A673 (cell line): ENCODE measurements at regions of chr7 and their contacts with region 1.

Region 1: GRCh38 chr7:82049891-82050533 is 280.2 kb upstream of the HGF start:
- DNase-seq: peak; percentile 73
- H3K4me3 ChIP-seq: no peak overlapping the region
- H3K27ac ChIP-seq: peak overlapping the region; percentile 22
- H3K4me1 ChIP-seq: peaks cover 46% of the 10 kb centered on the region
- H3K27me3 ChIP-seq: no peaks in the 10 kb centered on the region
- CTCF ChIP-seq: no peak

Region 2: DNA sequence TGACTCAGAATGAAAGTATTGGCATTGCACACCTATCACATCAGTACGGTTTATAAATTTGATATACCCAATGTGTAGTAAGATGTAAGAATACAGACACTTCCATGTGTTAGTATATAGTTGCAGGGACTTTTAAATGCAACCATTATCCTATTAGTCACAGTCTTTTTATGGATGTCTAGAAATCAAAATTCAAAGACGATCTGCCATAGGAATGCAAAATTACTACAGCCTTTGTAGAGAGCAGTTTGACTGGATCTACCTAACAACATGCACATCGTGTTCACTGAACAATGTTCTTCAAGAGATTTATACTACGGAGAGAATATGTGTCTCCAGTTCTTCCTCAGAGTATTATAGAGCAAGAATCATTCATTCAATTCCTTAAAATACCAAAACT is 37.1 kb after region 1 on chr7:
- CTCF ChIA-PET with region 1: no interaction called
- POLR2A ChIA-PET with region 1: no interaction called
- intact Hi-C with region 1: loop called (anchors 5 kb)
- DNase-seq: peak; percentile 84
- H3K4me3 ChIP-seq: peak overlapping the region; percentile 6
- H3K27ac ChIP-seq: no peak overlapping the region
- H3K4me1 ChIP-seq: peaks cover 46% of the 10 kb centered on the region
- H3K27me3 ChIP-seq: no peaks in the 10 kb centered on the region
- CTCF ChIP-seq: no peak

Region 3: GRCh38 chr7:82141427-82141826 is 91.4 kb after region 1 on chr7:
- CTCF ChIA-PET with region 1: no interaction called
- POLR2A ChIA-PET with region 1: no interaction called
- intact Hi-C with region 1: loop called (anchors 10 kb)
- DNase-seq: no peak
- H3K4me3 ChIP-seq: no peak overlapping the region
- H3K27ac ChIP-seq: no peak overlapping the region
- H3K4me1 ChIP-seq: peaks cover 19% of the 10 kb centered on the region
- H3K27me3 ChIP-seq: no peaks in the 10 kb centered on the region
- CTCF ChIP-seq: no peak

Region 4: DNA sequence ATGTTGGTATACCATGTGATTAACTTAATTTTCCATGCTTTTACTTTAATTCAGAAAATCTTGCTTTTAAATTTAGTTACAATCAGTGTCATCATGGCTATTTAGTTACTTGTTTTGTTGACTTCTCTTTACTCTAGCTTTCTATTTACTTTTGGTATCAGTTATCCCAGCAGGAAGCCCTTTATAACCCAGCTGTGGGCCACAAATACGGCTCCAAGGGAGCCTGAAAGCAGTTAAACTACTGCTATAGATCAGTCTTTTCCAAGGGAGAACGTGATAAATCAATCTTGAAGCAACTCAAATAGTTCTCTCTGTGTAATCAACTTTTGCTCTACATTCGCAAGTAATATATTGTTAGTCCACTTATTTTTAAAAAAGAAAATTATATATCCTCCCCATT is 106.2 kb after region 1 on chr7:
- CTCF ChIA-PET with region 1: no interaction called
- POLR2A ChIA-PET with region 1: no interaction called
- intact Hi-C with region 1: no loop called
- DNase-seq: peak; percentile 68
- H3K4me3 ChIP-seq: no peak overlapping the region
- H3K27ac ChIP-seq: no peak overlapping the region
- H3K4me1 ChIP-seq: peaks cover 25% of the 10 kb centered on the region
- H3K27me3 ChIP-seq: peaks cover 16% of the 10 kb centered on the region
- CTCF ChIP-seq: no peak

Region 5: DNA sequence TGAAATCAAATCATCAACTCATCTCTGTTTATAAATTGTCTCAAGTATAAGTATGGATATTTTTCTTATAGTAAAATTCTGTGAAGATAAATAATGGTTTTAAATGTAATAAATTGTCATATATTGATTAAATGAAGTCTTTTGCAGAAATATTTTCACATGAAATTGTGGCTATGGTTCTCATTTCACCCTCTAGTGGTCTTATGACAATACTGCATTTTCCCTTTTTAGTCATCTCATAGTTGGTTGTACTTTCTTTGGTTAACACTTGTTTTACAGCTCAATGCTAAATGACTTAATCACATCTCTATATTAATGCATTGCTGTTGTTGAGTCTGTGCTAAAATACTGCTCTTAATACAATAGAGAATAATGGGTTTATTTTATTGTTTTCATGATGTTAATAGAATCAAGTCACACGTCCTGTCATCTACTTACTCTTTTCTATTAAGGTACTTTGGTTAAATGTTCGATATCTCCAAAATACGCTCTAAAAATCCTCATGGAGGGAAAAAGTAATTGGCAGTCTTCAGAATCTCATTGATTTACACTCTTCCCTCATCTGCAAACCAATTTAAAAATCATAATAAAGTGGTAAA is 431.6 kb after region 1 on chr7:
- CTCF ChIA-PET with region 1: no interaction called
- POLR2A ChIA-PET with region 1: no interaction called
- intact Hi-C with region 1: loop called (anchors 5 kb)
- DNase-seq: peak; percentile 40
- H3K4me3 ChIP-seq: no peak overlapping the region
- H3K27ac ChIP-seq: no peak overlapping the region
- H3K4me1 ChIP-seq: no peaks in the 10 kb centered on the region
- H3K27me3 ChIP-seq: no peaks in the 10 kb centered on the region
- CTCF ChIP-seq: peak; percentile 84